ENCODE measurements at regions of chr2 and their contacts with region 1.

Region 1: GRCh38 chr2:206800506-206801417 is 35.4 kb downstream of the FASTKD2 start:
- DNase-seq: peak in 2 of 5 donors; percentile 9 to 47
- H3K4me3 ChIP-seq: peak overlapping the region; percentile 33
- H3K4me3 Mint-ChIP-seq: peak overlapping the region in 4 of 7 donors; percentile 48 to 74 (median 54)
- H3K27ac ChIP-seq: no peak overlapping the region
- H3K27ac Mint-ChIP-seq: peak overlapping the region in 2 of 8 donors; percentile 30 to 42
- H3K4me1 ChIP-seq: peaks cover 7% of the 10 kb centered on the region
- H3K4me1 Mint-ChIP-seq: peaks cover 7 to 10% (median 7%) of the 10 kb centered on the region in 3 donors
- H3K27me3 ChIP-seq: no peaks in the 10 kb centered on the region
- H3K27me3 Mint-ChIP-seq: no peaks in the 10 kb centered on the region

Region 2: DNA sequence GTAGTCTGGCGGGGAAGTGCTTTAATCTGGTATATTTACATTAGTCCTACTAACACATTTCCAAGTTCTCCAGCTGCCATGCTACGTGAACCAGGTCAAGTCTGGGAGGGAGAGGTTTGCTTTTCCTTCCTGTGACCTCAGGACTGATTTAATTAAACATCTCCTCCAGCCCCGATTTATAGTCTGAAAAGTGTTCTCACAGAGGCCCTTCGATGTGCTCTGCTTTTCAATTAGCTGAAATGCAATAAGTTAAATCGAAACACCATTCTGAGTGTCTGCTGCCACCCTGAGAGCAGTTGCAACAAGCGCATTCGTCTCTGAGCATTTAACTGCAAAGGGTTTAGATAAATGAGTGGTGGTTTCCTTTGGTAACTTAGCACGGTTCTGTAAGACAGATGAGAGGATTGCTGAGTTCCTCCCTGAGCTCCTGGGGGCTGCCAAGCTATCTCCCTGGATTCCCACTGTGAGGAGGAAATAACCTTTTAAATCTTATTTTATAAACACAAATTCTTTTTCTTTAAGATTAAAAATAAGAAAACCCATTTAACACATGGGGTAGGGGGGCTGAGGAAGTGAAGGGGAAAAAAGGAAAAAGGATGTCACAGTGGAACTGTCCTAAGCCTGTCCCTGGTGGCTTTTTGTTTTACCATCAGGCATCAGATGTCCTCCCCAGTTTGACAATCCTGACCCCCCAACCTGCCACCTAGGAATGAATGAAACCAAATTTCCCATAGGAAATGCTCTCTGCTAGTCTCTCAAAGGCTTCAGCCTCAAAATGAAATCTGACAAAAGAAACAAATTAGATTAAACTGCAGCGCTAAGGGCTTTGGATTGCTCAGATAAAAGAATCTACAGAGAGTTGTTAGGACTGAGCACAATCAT is 672.5 kb after region 1 on chr2:
- CTCF ChIA-PET with region 1: interaction called, 10 read pairs
- POLR2A ChIA-PET with region 1: no interaction called
- DNase-seq: peak in 1 of 5 donors; percentile 33
- H3K4me3 ChIP-seq: no peak overlapping the region
- H3K4me3 Mint-ChIP-seq: no peak overlapping the region
- H3K27ac ChIP-seq: no peak overlapping the region
- H3K27ac Mint-ChIP-seq: peak overlapping the region in 1 of 8 donors; percentile 63
- H3K4me1 ChIP-seq: peaks cover 5% of the 10 kb centered on the region
- H3K4me1 Mint-ChIP-seq: peaks cover 7 to 9% (median 8%) of the 10 kb centered on the region in 3 donors
- H3K27me3 ChIP-seq: no peaks in the 10 kb centered on the region
- H3K27me3 Mint-ChIP-seq: peaks cover 0 to 3% of the 10 kb centered on the region in 2 donors

Measured in CD8-positive, alpha-beta memory T cell (primary cell).